ENCODE measurements at regions of chr6 and their contacts with region 1.

Region 1: DNA sequence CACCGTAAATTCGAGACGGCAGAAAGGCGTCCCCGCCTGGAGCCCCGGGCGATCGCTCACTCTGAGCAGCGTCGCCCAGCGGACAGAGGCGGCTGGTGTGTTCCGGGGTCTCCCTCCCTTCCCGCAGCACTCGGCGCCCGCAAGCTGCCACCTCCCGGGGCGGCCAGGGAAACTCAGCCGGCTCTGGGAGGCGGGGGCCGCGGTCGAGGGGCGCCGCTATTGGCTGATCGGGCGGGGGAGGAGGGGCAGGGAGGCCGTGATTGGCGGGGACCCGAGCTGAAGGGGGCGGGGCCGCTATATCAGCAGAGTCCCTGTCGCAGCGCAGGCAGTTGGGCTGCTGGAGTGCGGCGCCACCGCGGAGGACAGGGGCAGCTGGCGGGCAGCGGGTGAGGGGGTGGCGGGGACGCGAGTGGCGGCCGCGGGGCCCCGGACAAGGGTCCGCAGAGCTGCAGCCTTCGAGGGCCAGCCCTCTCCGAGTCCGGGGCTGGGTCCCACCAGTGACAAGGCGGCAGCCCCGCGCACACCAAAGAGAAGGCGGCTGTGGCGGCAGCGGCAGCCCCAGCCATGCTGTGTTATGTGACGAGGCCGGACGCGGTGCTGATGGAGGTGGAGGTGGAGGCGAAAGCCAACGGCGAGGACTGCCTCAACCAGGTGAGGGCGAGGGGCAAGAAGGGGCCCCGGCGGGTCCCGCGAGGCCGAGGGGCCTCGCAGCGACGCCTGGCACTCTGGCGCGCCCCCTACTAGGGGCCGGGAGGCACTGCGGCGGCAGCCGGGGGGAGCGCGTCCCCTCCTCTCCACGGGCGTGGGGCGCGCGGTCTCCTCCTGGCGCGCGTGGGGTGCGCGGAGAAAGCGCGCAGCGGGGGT is at the start of gene MYLIP:
- DNase-seq: peak; percentile 98 to 99
- ATAC-seq: peak; percentile 97 to 99 (median 98)
- H3K4me3 ChIP-seq: peak within 1 kb of the TSS; percentile 81 to 100 (median 98)
- H3K27ac ChIP-seq: peak within 1 kb of the TSS; percentile 94 to 99 (median 98)
- H3K4me1 ChIP-seq: peaks cover 0 to 53% (median 37%) of the 10 kb centered on the region in 9 donors
- H3K27me3 ChIP-seq: no peaks in the 10 kb centered on the region
- CTCF ChIP-seq: peak; percentile 53 to 90 (median 69)
- total RNA-seq, gene MYLIP: 6.9 to 22.5 (median 14.9) TPM

Region 2: GRCh38 chr6:15691250-15691869 is 437.6 kb before region 1 on chr6:
- intact Hi-C with region 1: loop called in 9 of 10 experiments (anchors 1 to 5 kb)
- DNase-seq: peak; percentile 82 to 83
- ATAC-seq: peak; percentile 95 to 99 (median 98)
- H3K4me3 ChIP-seq: peak overlapping the region in 8 of 10 donors; percentile 0 to 43 (median 34)
- H3K27ac ChIP-seq: peak overlapping the region in 3 of 10 donors; percentile 13 to 67 (median 46)
- H3K4me1 ChIP-seq: peaks cover 0 to 19% (median 9%) of the 10 kb centered on the region in 9 donors
- H3K27me3 ChIP-seq: no peaks in the 10 kb centered on the region
- CTCF ChIP-seq: peak; percentile 98 to 100 (median 100)

Region 3: GRCh38 chr6:15879382-15880261 is 249.4 kb before region 1 on chr6:
- intact Hi-C with region 1: loop called in 1 of 10 experiments (anchors 10 kb)
- DNase-seq: peak; percentile 76 to 81
- ATAC-seq: peak; percentile 70 to 91 (median 83)
- H3K4me3 ChIP-seq: no peak overlapping the region
- H3K27ac ChIP-seq: peak overlapping the region in 5 of 10 donors; percentile 18 to 40 (median 32)
- H3K4me1 ChIP-seq: peaks cover 3 to 33% (median 12%) of the 10 kb centered on the region in 9 donors
- H3K27me3 ChIP-seq: no peaks in the 10 kb centered on the region
- CTCF ChIP-seq: no peak

Region 4: DNA sequence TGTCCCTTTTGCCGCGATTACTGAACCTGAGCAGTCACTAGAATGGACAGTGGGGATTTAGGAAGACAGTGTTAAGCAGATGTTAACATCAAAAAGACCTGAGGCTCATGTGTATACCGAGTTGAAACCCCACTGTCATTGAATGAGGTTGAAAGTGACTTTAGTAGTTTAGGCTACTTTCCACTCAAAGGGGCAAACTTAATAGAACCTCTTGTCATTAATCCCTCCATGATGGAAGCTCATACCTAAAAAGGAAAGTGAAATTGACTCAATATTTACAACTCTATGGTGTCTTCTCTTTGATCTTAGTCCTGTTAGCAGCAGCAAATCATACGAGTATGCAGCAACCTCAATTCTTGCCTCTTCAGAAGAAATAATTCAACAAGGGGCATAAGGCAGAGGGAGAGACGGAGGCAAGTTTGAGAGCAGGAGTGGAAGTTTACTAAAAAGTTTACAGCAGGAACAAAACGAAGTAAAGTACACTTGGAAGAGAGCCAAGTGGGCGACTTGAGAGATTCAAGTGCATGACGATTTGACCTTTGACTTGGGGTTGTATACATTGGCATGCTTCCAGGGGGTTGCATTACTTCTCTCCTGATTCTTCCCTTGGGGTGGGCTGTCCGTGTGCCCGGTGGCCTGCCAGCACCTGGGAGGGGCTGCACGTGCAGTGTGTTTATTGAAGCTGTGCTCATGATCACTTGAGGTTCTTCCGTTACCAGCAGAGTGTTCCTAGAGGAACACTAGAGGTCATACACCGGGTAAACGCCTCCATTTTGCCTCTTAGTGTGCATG is 172.9 kb before region 1 on chr6:
- intact Hi-C with region 1: loop called in 1 of 10 experiments (anchors 5 kb)
- DNase-seq: no peak
- ATAC-seq: no peak
- H3K4me3 ChIP-seq: no peak overlapping the region
- H3K27ac ChIP-seq: no peak overlapping the region
- H3K4me1 ChIP-seq: peaks cover 10 to 36% (median 22%) of the 10 kb centered on the region in 9 donors
- H3K27me3 ChIP-seq: no peaks in the 10 kb centered on the region
- CTCF ChIP-seq: no peak

Region 5: GRCh38 chr6:16108921-16109658 is 19.9 kb before region 1 on chr6:
- intact Hi-C with region 1: no loop called
- DNase-seq: peak in 1 of 2 donors; percentile 25
- ATAC-seq: peak in 6 of 8 donors; percentile 45 to 92 (median 69)
- H3K4me3 ChIP-seq: no peak overlapping the region
- H3K27ac ChIP-seq: peak overlapping the region in 4 of 10 donors; percentile 1 to 20 (median 12)
- H3K4me1 ChIP-seq: peaks cover 0 to 26% (median 20%) of the 10 kb centered on the region in 9 donors
- H3K27me3 ChIP-seq: no peaks in the 10 kb centered on the region
- CTCF ChIP-seq: no peak

Region 6: DNA sequence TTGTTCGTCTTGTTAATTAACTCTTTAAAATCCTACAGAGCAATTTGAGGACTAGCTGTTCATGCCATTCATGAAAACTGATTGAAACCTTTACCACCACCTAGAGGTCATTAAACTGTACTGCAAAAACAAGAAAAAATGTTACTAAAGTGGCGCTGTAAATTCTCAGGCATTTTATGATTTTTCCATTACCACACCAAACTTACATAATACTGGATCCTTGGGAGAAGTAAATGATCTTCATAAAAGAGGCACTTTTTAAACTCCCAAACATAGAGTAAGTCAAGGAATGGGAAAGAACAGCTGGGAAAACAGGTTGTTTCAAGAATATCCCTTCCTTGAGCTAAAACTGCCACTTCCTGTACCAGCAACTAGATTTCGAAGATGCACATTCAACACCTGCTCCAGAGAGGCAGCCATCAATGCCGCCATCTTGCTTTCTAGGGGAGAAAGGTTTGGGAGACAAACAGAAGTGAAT is 54.2 kb after region 1 on chr6:
- intact Hi-C with region 1: loop called in 6 of 10 experiments (anchors 5 to 10 kb)
- DNase-seq: no peak
- ATAC-seq: peak in 7 of 8 donors; percentile 38 to 62 (median 54)
- H3K4me3 ChIP-seq: no peak overlapping the region
- H3K27ac ChIP-seq: peak overlapping the region in 2 of 10 donors; percentile 16 to 51
- H3K4me1 ChIP-seq: peaks cover 0 to 17% (median 4%) of the 10 kb centered on the region in 9 donors
- H3K27me3 ChIP-seq: no peaks in the 10 kb centered on the region
- CTCF ChIP-seq: peak; percentile 63 to 85 (median 78)

Measured in heart right ventricle (tissue), 16 donors.